ENCODE measurements at regions of chr3 and their contacts with region 1.

Region 1: GRCh38 chr3:46378426-46378942 is 7.7 kb downstream of the CCR5 start:
- DNase-seq: peak; percentile 63

Region 2: DNA sequence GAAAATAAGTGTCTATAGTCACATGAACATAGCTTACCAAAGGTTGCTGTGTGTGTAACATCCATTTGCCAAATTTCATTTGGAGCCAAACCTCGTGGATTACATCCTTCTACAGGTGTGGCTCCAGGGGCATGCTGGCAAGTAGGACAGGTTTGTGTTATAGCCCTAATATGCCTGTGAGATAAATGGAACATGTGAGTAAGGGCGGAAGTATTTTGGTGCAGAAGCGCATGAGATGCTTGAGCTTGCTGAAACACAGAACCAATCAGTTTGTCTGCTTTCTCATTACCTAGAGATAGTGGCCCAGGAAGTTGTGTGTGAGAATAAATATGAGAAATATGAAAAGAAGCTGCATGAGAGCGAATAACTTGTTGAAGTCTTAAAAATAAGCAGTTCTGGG is 329.4 kb before region 1 on chr3:
- in situ Hi-C with region 1: no loop called
- DNase-seq: no peak

Region 3: GRCh38 chr3:46089237-46090011 is 289.1 kb before region 1 on chr3:
- in situ Hi-C with region 1: loop called (anchors 10 kb)
- DNase-seq: no peak

Region 4: GRCh38 chr3:46214751-46215352 is 163.6 kb before region 1 on chr3:
- in situ Hi-C with region 1: loop called (anchors 10 kb)
- DNase-seq: peak; percentile 61

Measured in KBM-7 (cell line).